A673 (cell line): ENCODE measurements at regions of chr13 and their contacts with region 1.

Region 1: DNA sequence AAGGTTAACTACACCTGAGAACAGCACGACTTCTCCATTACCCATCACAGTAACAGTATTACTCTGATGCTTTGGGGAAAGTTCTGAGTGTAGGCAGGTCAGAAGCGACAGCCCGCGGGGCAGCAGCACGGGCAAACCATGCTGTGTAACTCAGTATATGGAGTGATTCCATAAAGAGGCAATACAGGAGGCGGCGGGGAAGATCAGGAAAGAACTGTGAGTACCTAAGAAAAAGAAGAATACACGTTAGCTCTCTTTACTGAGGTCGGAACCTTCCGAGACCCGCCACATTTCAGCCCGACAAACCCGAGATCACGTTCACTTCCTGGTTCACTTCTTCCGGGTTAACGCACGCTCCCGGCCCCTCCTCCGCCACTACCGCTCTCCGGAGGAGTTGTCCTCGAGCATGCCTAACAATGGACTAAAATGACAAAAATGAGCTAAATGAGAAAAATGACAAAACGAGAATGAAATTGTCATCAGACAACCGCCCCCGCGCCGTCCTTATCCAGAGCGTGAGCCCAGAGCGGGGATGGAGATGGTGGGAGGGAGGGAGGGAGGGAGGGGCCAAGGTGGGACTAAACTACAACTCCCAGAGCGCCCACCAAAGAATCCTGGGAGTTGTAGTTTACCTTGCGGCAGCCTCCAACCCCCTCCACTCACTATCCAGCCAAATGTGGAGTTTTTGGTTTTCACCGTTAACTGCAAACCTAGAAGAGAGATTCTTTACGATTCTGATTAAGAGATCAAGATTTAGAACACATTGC is at the start of gene MTRF1:
- DNase-seq: peak; percentile 91
- H3K4me3 ChIP-seq: peak within 1 kb of the TSS; percentile 54
- H3K27ac ChIP-seq: peak within 1 kb of the TSS; percentile 39
- H3K4me1 ChIP-seq: peaks cover 4% of the 10 kb centered on the region
- H3K27me3 ChIP-seq: no peaks in the 10 kb centered on the region
- CTCF ChIP-seq: no peak
- total RNA-seq, gene MTRF1: 16.5 and 18.0 TPM in 2 replicates

Region 2: GRCh38 chr13:41306271-41307145 is 43.1 kb after region 1 on chr13:
- CTCF ChIA-PET with region 1: no interaction called
- POLR2A ChIA-PET with region 1: no interaction called
- intact Hi-C with region 1: loop called (anchors 5 kb)
- DNase-seq: peak; percentile 89
- H3K4me3 ChIP-seq: no peak overlapping the region
- H3K27ac ChIP-seq: no peak overlapping the region
- H3K4me1 ChIP-seq: peaks cover 17% of the 10 kb centered on the region
- H3K27me3 ChIP-seq: peaks cover 32% of the 10 kb centered on the region
- CTCF ChIP-seq: no peak

Region 3: DNA sequence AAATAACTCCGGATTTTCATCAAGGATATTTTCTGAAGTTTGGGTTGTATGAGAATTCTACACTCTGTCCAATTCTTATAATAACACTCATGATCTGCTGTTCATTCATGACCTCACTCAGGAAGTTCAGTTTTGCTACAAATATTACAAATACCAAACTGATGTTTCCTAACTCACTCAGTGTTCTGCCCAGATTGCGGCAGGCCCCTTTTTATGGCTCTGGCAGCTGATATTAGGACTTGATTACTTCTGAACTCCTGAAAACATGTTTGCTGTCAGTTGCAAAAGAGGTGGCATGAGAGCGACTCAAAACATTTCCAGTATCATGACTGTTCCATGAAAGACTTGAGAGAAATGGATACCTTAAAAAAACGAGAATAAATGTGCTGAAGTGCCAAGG is 381.9 kb after region 1 on chr13:
- CTCF ChIA-PET with region 1: no interaction called
- POLR2A ChIA-PET with region 1: no interaction called
- intact Hi-C with region 1: no loop called
- DNase-seq: no peak
- H3K4me3 ChIP-seq: no peak overlapping the region
- H3K27ac ChIP-seq: no peak overlapping the region
- H3K4me1 ChIP-seq: peaks cover 2% of the 10 kb centered on the region
- H3K27me3 ChIP-seq: no peaks in the 10 kb centered on the region
- CTCF ChIP-seq: no peak

Region 4: DNA sequence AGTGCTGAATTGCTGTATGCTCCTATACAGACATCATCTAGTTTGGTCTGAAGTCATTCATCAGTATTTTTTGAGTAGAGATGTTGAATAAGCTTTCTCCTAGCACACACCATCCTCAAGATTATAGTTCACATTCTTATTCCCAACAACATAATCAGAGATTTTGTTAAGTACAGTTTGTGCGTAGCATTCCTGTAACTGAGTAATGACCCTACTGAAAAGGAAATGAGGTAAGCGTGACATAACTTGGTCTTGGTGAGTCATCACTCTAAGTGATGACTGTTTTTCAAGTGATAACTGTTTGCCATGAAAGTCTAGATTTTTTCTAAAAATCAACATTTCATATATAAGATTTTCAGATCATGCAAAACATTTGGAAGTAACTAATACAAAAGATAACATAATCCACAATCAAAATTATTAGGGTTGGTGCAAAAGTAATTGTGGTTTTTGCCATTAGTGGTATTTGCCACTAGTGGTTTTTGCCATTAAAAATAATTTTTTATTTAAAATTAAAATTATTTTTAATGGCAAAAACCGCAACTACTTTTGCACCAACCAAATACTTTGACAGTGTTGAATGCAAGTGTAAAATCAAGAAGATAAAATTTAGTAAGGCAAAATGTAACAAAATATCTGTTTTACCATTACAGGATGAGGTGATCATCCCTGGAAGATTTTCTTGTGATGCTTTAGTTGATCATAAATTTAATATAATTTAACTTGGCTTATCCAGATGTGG is 1499.6 kb after region 1 on chr13:
- CTCF ChIA-PET with region 1: no interaction called
- POLR2A ChIA-PET with region 1: no interaction called
- intact Hi-C with region 1: no loop called
- DNase-seq: peak; percentile 27
- H3K4me3 ChIP-seq: no peak overlapping the region
- H3K27ac ChIP-seq: no peak overlapping the region
- H3K4me1 ChIP-seq: no peaks in the 10 kb centered on the region
- H3K27me3 ChIP-seq: no peaks in the 10 kb centered on the region
- CTCF ChIP-seq: no peak